WTC11 (cell line): ENCODE measurements at regions of chr6 and their contacts with region 1.

Region 1: GRCh38 chr6:142474531-142475289 is 172.9 kb downstream of the ADGRG6 start:
- DNase-seq: peak; percentile 85
- ATAC-seq: peak; percentile 98
- H3K4me3 Mint-ChIP-seq: peak overlapping the region; percentile 39
- H3K27ac Mint-ChIP-seq: no peak overlapping the region
- H3K4me1 Mint-ChIP-seq: peaks cover 7% of the 10 kb centered on the region
- H3K27me3 Mint-ChIP-seq: no peaks in the 10 kb centered on the region
- CTCF ChIP-seq: peak; percentile 74

Region 2: GRCh38 chr6:142236691-142237090 is 238.0 kb before region 1 on chr6:
- CTCF ChIA-PET with region 1: interaction called, 16 read pairs
- POLR2A ChIA-PET with region 1: no interaction called
- DNase-seq: no peak
- ATAC-seq: no peak
- H3K4me3 Mint-ChIP-seq: no peak overlapping the region
- H3K27ac Mint-ChIP-seq: no peak overlapping the region
- H3K4me1 Mint-ChIP-seq: peaks cover 29% of the 10 kb centered on the region
- H3K27me3 Mint-ChIP-seq: peaks cover 48% of the 10 kb centered on the region
- CTCF ChIP-seq: no peak

Region 3: GRCh38 chr6:142537612-142538478 is 63.1 kb after region 1 on chr6:
- CTCF ChIA-PET with region 1: interaction called, 39 read pairs
- POLR2A ChIA-PET with region 1: no interaction called
- DNase-seq: peak; percentile 59
- ATAC-seq: peak; percentile 86
- H3K4me3 Mint-ChIP-seq: no peak overlapping the region
- H3K27ac Mint-ChIP-seq: no peak overlapping the region
- H3K4me1 Mint-ChIP-seq: no peaks in the 10 kb centered on the region
- H3K27me3 Mint-ChIP-seq: peaks cover 3% of the 10 kb centered on the region; the same call in 1 of the 2 replicates
- CTCF ChIP-seq: peak; percentile 66

Region 4: GRCh38 chr6:142566628-142567396 is 92.1 kb after region 1 on chr6:
- CTCF ChIA-PET with region 1: interaction called, 17 read pairs
- POLR2A ChIA-PET with region 1: no interaction called
- DNase-seq: peak; percentile 76
- ATAC-seq: peak; percentile 86
- H3K4me3 Mint-ChIP-seq: no peak overlapping the region
- H3K27ac Mint-ChIP-seq: no peak overlapping the region
- H3K4me1 Mint-ChIP-seq: peaks cover 58% of the 10 kb centered on the region
- H3K27me3 Mint-ChIP-seq: no peaks in the 10 kb centered on the region
- CTCF ChIP-seq: peak; percentile 82

Region 5: GRCh38 chr6:142746524-142746923 is 271.8 kb after region 1 on chr6:
- CTCF ChIA-PET with region 1: interaction called, 16 read pairs
- POLR2A ChIA-PET with region 1: no interaction called
- DNase-seq: peak; percentile 59
- ATAC-seq: peak; percentile 99
- H3K4me3 Mint-ChIP-seq: no peak overlapping the region
- H3K27ac Mint-ChIP-seq: no peak overlapping the region
- H3K4me1 Mint-ChIP-seq: peaks cover 9% of the 10 kb centered on the region; the same call in 1 of the 2 replicates
- H3K27me3 Mint-ChIP-seq: no peaks in the 10 kb centered on the region
- CTCF ChIP-seq: no peak

Region 6: GRCh38 chr6:143232849-143233248 is 758.1 kb after region 1 on chr6:
- CTCF ChIA-PET with region 1: interaction called, 10 read pairs
- POLR2A ChIA-PET with region 1: no interaction called
- DNase-seq: peak; percentile 74
- ATAC-seq: peak; percentile 75
- H3K4me3 Mint-ChIP-seq: no peak overlapping the region
- H3K27ac Mint-ChIP-seq: no peak overlapping the region
- H3K4me1 Mint-ChIP-seq: peaks cover 23% of the 10 kb centered on the region
- H3K27me3 Mint-ChIP-seq: no peaks in the 10 kb centered on the region
- CTCF ChIP-seq: peak; percentile 54; the same call in 1 of the 2 replicates

Region 7: GRCh38 chr6:143427109-143427817 is 952.6 kb after region 1 on chr6:
- CTCF ChIA-PET with region 1: interaction called, 12 read pairs
- POLR2A ChIA-PET with region 1: no interaction called
- DNase-seq: peak; percentile 84
- ATAC-seq: peak; percentile 100
- H3K4me3 Mint-ChIP-seq: no peak overlapping the region
- H3K27ac Mint-ChIP-seq: no peak overlapping the region
- H3K4me1 Mint-ChIP-seq: no peaks in the 10 kb centered on the region; the same call in 1 of the 2 replicates
- H3K27me3 Mint-ChIP-seq: no peaks in the 10 kb centered on the region
- CTCF ChIP-seq: peak; percentile 76